ENCODE measurements at regions of chr9 and their contacts with region 1.

Region 1: GRCh38 chr9:120868676-120869359 is 8.2 kb downstream of the PHF19 start:
- DNase-seq: peak; percentile 96
- ATAC-seq: peak; percentile 92
- H3K4me3 Mint-ChIP-seq: peak overlapping the region; percentile 91
- H3K27ac Mint-ChIP-seq: peak overlapping the region; percentile 97
- H3K4me1 Mint-ChIP-seq: peaks cover 25% of the 10 kb centered on the region
- H3K27me3 Mint-ChIP-seq: no peaks in the 10 kb centered on the region
- CTCF ChIP-seq: no peak

Region 2: DNA sequence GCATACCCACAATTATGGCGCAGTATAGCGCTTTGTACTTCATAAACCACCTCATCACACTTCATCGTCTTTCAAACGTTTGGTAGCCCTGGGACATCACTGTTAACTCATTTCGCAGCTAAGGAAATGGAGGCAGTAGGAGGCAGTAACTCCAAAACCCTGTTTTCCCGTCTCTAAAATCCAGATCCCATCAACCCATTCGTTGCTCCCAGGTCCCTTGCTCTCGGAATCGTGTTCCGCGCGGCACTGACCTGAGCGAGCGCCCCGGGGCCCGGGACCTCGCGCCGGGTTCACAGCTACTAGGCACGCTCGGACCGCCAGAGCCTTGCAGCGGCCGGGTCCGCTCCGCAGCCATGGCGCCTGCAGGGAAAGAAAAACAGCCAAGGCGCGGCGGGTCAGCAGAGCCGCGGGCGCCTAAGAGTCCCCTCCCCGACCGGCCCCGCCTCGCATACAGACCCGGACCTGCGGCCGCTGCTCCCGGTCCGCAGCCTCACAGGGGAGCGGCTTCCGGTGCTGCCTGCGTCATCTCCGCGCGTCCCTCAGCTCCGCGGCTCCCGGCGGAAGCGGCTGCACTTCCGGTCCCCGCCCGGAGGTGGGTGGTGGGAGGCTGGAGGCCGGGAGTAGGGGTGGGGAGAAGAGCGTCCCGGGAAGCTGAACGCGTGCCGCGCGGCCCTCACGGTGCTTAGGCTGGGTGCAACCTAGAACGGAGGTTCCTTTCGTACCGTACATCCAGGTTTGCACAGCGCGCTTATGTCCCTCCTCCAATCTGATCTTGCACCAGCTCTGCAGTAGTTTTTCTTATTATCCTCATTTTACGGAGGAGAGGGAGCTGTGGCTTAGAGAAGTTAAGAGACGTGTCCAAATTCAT is 75.7 kb before region 1 on chr9 and contains the start of gene FBXW2:
- CTCF ChIA-PET with region 1: no interaction called
- POLR2A ChIA-PET with region 1: interaction called, 12 read pairs
- intact Hi-C with region 1: loop called (anchors 1 kb)
- DNase-seq: peak; percentile 87
- ATAC-seq: peak; percentile 91
- H3K4me3 Mint-ChIP-seq: peak within 1 kb of the TSS; percentile 91
- H3K27ac Mint-ChIP-seq: peak within 1 kb of the TSS; percentile 89
- H3K4me1 Mint-ChIP-seq: peaks cover 38% of the 10 kb centered on the region
- H3K27me3 Mint-ChIP-seq: no peaks in the 10 kb centered on the region
- CTCF ChIP-seq: no peak
- total RNA-seq, gene FBXW2: 70.4 and 77.9 TPM in 2 replicates

Region 3: GRCh38 chr9:120892748-120893610 is 24.2 kb after region 1 on chr9:
- CTCF ChIA-PET with region 1: interaction called, 7 read pairs
- POLR2A ChIA-PET with region 1: interaction called, 5 read pairs
- intact Hi-C with region 1: loop called (anchors 1 kb)
- DNase-seq: no peak
- ATAC-seq: peak; percentile 82
- H3K4me3 Mint-ChIP-seq: peak overlapping the region; percentile 61
- H3K27ac Mint-ChIP-seq: peak overlapping the region; percentile 90
- H3K4me1 Mint-ChIP-seq: peaks cover 60% of the 10 kb centered on the region
- H3K27me3 Mint-ChIP-seq: no peaks in the 10 kb centered on the region
- CTCF ChIP-seq: no peak

Region 4: DNA sequence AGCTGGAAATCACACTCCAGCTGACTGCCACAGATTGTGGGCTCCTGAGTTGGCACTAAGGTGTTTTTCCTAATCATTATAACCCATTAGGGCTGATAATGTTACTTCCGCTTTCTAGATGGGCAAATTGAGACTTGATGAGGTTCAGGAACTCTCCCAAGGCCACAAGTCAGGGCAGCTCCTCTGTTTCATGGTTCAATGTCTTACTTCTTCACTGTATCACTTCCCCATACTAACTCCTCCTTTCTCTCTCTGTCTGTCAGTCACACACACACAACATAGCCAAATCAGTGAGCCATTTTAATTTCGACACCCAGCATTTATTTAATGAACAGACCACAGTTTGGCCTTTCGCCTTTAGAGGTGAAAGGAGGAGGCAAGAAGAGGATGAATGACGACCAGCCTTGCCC is 75.6 kb after region 1 on chr9:
- CTCF ChIA-PET with region 1: interaction called, 3 read pairs
- POLR2A ChIA-PET with region 1: interaction called, 6 read pairs
- intact Hi-C with region 1: loop called (anchors 2 kb)
- DNase-seq: no peak
- ATAC-seq: peak; percentile 100
- H3K4me3 Mint-ChIP-seq: peak overlapping the region; percentile 7
- H3K27ac Mint-ChIP-seq: peak overlapping the region; percentile 64
- H3K4me1 Mint-ChIP-seq: peaks cover 23% of the 10 kb centered on the region
- H3K27me3 Mint-ChIP-seq: no peaks in the 10 kb centered on the region
- CTCF ChIP-seq: no peak

Region 5: DNA sequence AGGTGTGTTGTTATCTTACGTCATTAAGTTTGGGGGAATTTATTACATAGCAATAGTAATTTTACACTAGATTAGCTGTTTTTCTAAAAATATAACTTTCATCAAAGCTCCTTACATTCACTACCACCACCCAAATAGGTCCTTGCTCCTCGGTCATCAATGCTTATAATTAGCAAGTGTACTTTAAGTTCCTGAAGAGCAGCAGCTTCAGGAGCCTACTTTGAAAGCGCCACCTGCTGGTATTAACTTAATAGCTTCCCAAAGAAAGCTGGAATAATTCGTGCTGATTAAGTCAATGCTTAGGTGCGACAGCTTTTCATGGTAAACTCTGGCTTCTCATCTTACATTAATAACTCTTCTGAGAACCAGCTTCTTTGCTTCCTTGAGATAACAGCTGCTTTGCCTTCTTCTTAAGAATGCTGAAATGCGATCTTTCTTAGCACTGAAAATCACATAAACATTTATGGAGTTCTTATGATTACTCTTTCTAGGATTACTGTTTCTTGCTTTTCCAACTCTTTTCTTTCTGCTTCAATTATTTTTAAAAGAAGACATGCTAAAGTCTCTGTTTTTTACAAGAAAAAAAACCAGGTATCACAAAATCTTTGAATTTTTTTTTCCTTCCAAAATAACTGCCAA is 191.3 kb after region 1 on chr9:
- CTCF ChIA-PET with region 1: interaction called, 15 read pairs
- POLR2A ChIA-PET with region 1: no interaction called
- intact Hi-C with region 1: loop called (anchors 1 kb)
- DNase-seq: no peak
- ATAC-seq: peak; percentile 67
- H3K4me3 Mint-ChIP-seq: no peak overlapping the region
- H3K27ac Mint-ChIP-seq: no peak overlapping the region
- H3K4me1 Mint-ChIP-seq: peaks cover 5% of the 10 kb centered on the region
- H3K27me3 Mint-ChIP-seq: no peaks in the 10 kb centered on the region
- CTCF ChIP-seq: peak; percentile 56

Measured in activated B cell treated with CpG ODN at 0.5 μM for 24 hours (primary cell).